ENCODE measurements at regions of chr10 and their contacts with region 1.

Region 1: DNA sequence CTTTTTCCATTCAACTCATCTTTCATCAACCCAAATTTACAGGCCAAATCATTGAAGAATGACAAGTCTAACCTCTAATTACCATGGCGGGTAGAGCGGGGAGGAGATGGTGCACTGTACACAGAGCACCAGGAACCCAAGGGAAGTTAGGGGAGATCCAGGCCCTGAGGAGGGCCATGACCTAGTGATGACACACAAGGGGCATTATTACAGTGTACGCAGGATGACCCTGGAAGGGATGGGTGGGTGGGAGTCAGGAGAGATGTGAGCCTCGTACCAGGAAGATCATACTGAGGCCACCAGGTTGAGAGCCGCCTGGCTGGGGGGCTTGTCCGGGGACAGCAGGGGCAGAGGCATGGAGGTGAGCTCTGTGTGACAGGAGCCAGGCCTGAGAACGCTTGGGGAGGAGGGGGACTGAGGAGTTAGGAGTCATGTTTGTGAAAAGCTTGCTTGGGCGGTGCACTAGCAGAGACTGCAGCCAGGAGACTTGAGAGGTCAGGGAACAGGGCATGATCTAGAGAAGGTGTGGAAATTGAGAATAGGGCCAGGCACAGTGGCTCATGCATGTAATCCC is 89.5 kb upstream of the CCNY start:
- DNase-seq: no peak
- ATAC-seq: no peak

Region 2: GRCh38 chr10:35027567-35027966 is 219.3 kb before region 1 on chr10:
- intact Hi-C with region 1: no loop called
- DNase-seq: no peak
- ATAC-seq: no peak

Region 3: GRCh38 chr10:35300063-35300699 is 53.3 kb after region 1 on chr10:
- intact Hi-C with region 1: no loop called
- DNase-seq: no peak
- ATAC-seq: no peak

Region 4: GRCh38 chr10:35328404-35329037 is 81.7 kb after region 1 on chr10:
- intact Hi-C with region 1: loop called (anchors 5 kb)
- DNase-seq: no peak
- ATAC-seq: no peak

Region 5: DNA sequence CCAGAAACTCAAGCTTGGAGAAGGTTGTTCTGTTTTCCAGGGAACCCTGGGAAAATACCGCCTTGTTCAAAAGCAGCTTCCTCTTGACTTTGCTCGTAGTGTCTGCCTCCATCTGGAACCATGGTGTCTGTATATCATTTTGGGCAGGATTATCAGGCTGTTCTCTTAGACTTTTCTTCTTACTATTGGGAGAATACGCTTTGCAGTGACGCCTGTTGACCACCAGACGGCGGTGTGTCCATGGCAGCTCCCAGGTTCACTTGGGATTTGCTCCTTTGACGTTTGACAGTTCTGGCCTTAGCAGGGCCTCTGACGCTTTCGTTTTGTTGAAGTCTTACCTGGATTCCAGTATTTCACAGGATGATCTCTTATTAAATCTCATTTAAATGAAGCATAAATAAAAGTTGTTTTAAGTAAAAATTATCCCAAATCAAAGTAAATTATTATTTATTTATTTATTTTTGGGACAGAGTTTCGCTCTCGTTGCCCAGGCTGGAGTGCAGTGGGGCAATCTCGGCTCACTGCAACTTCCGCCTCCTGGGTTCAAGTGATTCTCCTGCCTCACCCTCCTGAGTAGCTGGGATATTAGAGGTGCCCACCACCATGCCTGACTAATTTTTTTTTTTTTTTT is 316.5 kb after region 1 on chr10:
- intact Hi-C with region 1: loop called (anchors 10 kb)
- DNase-seq: no peak
- ATAC-seq: peak; percentile 49

Region 6: GRCh38 chr10:35598384-35598783 is 351.5 kb after region 1 on chr10:
- intact Hi-C with region 1: loop called (anchors 10 kb)
- DNase-seq: no peak
- ATAC-seq: no peak

Measured in Right ventricle myocardium inferior (tissue), 1 donor.